ENCODE measurements at regions of chr3 and their contacts with region 1.

Region 1: DNA sequence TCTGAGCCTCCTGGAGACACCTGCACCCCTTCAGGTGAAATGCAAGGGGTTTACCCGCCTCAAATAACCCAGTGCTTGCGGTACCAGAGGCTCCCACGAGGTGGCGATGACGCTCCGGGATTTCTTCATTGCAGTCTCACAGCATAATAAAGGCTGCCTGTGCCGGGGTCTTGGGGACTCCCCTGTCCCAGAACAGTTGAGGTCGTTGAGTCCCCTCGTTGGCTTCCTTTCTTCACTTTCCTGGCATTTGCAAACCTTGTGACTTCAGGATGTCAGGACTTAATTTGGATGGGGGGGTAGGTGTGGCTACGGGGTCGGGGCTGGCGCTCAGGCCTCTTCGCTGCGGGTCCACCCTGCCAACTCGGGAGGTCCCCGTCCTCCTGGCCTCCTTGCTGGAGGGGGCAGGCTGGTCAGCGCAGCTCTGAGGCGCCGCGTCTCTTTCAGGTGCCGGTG is 1.3 kb downstream of the GNAT1 start:
- DNase-seq: peak; percentile 77 to 100
- H3K4me3 ChIP-seq: no peak overlapping the region
- H3K27ac ChIP-seq: no peak overlapping the region
- H3K4me1 ChIP-seq: peaks cover 0 to 14% (median 7%) of the 10 kb centered on the region in 4 experiments; a peak in 5 of 7 replicates
- H3K27me3 ChIP-seq: peaks cover 0 to 12% (median 4%) of the 10 kb centered on the region in 4 experiments; a peak in 3 of 7 replicates
- CTCF ChIP-seq: peak in 2 of 3 experiments; percentile 92 to 98; a peak in 3 of 4 replicates
- EP300 ChIP-seq: 0 out of 3 replicates have a peak, but pooled peaks of 1 of the 2 experiments have one; percentile 33
- POLR2A ChIP-seq: no peak
- RAD21 ChIP-seq: peak; percentile 94 to 96

Region 2: GRCh38 chr3:50121416-50122032 is 71.2 kb before region 1 on chr3:
- CTCF ChIA-PET with region 1: interaction called, 591 read pairs
- POLR2A ChIA-PET with region 1: interaction called, 128 read pairs
- DNase-seq: peak; percentile 65 to 89
- H3K4me3 ChIP-seq: no peak overlapping the region
- H3K27ac ChIP-seq: no peak overlapping the region
- H3K4me1 ChIP-seq: peaks cover 4 to 27% (median 19%) of the 10 kb centered on the region in 4 experiments
- H3K27me3 ChIP-seq: no peaks in the 10 kb centered on the region
- CTCF ChIP-seq: peak in 2 of 3 experiments; percentile 94; a peak in 3 of 4 replicates
- EP300 ChIP-seq: no peak
- POLR2A ChIP-seq: no peak
- RAD21 ChIP-seq: peak; percentile 98

Region 3: DNA sequence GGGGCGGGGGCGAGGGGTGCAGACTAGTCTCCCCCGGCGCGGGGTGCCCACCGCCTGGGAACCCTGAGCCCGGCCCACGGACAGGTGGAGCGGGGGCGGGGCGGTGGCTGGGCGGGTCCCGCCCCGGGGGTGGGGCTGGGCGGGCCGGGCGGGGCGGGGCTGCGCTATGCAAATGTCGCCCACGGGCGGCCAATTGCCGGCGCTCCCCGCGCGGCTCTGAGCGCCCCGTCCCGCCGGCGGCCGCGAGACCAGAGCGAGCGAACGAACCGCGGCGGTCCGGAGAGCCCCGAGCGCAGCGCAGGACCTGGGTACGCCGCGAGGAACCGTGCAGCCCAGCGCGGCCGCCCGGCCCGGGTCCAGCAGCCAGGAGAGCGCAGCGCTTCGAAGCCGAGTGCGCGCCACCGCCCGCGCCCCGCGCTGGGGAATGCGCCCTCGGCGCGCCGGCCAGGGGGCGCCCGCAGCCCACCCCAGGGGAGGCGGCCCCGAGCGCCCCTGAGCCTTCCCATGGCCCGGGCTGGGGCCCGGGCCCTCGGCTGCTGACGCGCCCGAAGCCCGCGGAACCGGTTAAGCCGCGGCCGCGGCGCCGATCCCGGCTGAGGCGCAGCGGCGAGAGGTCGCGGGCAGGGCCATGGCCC is 37.8 kb before region 1 on chr3 and contains the start of gene SEMA3F:
- CTCF ChIA-PET with region 1: interaction called, 26 read pairs
- POLR2A ChIA-PET with region 1: interaction called, 7 read pairs
- DNase-seq: peak in 1 of 2 experiments; percentile 83
- H3K4me3 ChIP-seq: peak within 1 kb of the TSS; percentile 69 to 78 (median 72)
- H3K27ac ChIP-seq: no peak within 1 kb of the TSS
- H3K4me1 ChIP-seq: peaks cover 5 to 55% (median 40%) of the 10 kb centered on the region in 4 experiments
- H3K27me3 ChIP-seq: peaks cover 2 to 19% (median 15%) of the 10 kb centered on the region in 4 experiments; a peak in 6 of 7 replicates
- CTCF ChIP-seq: no peak; a peak in 1 of 4 replicates
- EP300 ChIP-seq: no peak
- POLR2A ChIP-seq: no peak
- RAD21 ChIP-seq: no peak; a peak in 1 of 4 replicates
- total RNA-seq, gene SEMA3F: 37.0 and 39.6 TPM in 2 replicates

Region 4: GRCh38 chr3:50211930-50212329 is 19.2 kb after region 1 on chr3:
- CTCF ChIA-PET with region 1: interaction called, 1,138 read pairs
- POLR2A ChIA-PET with region 1: interaction called, 20 read pairs
- DNase-seq: no peak
- H3K4me3 ChIP-seq: no peak overlapping the region
- H3K27ac ChIP-seq: no peak overlapping the region
- H3K4me1 ChIP-seq: peaks cover 0 to 23% (median 10%) of the 10 kb centered on the region in 4 experiments; a peak in 5 of 7 replicates
- H3K27me3 ChIP-seq: peaks cover 0 to 5% (median under 1%) of the 10 kb centered on the region in 4 experiments; a peak in 4 of 7 replicates
- CTCF ChIP-seq: no peak
- EP300 ChIP-seq: no peak
- POLR2A ChIP-seq: no peak
- RAD21 ChIP-seq: no peak

Region 5: GRCh38 chr3:50235716-50236496 is 43.2 kb after region 1 on chr3 and contains the start of gene GNAI2:
- CTCF ChIA-PET with region 1: interaction called, 2,149 read pairs
- POLR2A ChIA-PET with region 1: interaction called, 3 read pairs
- DNase-seq: peak; percentile 95 to 96
- H3K4me3 ChIP-seq: peak within 1 kb of the TSS; percentile 86 to 93 (median 90)
- H3K27ac ChIP-seq: 0 out of 2 replicates have a peak within 1 kb of the TSS, but pooled peaks have one; percentile 61
- H3K4me1 ChIP-seq: peaks cover 6 to 39% (median 36%) of the 10 kb centered on the region in 4 experiments
- H3K27me3 ChIP-seq: no peaks in the 10 kb centered on the region; a peak in 1 of 7 replicates
- CTCF ChIP-seq: no peak
- EP300 ChIP-seq: no peak
- POLR2A ChIP-seq: peak in 1 of 2 experiments; percentile 77; a peak in 2 of 3 replicates
- RAD21 ChIP-seq: no peak
- total RNA-seq, gene GNAI2: 168 and 169 TPM in 2 replicates

Region 6: DNA sequence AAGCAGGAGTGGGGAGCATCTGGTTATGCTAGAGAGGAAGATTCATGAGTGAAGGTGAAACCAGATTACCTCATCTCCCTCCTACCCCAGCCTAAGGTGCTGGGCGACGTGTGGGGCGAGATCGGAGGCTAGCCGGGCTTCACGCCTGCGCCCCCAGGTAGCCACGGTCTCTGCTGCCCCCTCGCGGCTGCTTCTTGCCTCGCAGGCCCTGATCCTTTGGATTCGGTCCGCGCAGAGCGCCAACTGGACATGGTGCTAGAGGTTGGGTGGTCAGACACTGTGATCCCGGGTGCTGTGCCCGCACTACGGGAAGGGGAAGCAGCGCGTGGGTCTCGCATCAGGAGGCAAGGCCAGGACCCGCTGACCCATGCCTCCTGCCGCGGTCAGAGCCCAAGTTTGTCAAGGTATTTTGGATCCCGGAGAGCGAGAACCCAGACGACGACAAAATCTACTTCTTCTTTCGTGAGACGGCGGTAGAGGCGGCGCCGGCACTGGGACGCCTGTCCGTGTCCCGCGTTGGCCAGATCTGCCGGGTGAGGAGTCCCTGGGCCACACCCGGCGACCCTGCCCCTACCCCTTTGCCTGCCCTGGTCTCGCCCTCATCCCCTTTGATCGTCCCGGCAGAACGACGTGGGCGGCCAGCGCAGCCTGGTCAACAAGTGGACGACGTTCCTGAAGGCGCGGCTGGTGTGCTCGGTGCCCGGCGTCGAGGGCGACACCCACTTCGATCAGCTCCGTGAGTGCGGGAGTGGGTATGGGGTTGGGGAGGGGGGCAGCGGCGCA is 80.4 kb after region 1 on chr3:
- CTCF ChIA-PET with region 1: interaction called, 2,149 read pairs
- POLR2A ChIA-PET with region 1: interaction called, 3 read pairs
- DNase-seq: peak in 1 of 2 experiments; percentile 100
- H3K4me3 ChIP-seq: peak overlapping the region in 1 of 4 experiments; percentile 46; a peak in 1 of 8 replicates
- H3K27ac ChIP-seq: no peak overlapping the region
- H3K4me1 ChIP-seq: peaks cover 0 to 20% (median 19%) of the 10 kb centered on the region in 4 experiments; a peak in 6 of 7 replicates
- H3K27me3 ChIP-seq: peaks cover 27 to 50% (median 42%) of the 10 kb centered on the region in 4 experiments
- CTCF ChIP-seq: peak in 2 of 3 experiments; percentile 98 to 99; a peak in 3 of 4 replicates
- EP300 ChIP-seq: no peak
- POLR2A ChIP-seq: no peak
- RAD21 ChIP-seq: peak; percentile 99